Endothelial cell of umbilical vein (primary cell): ENCODE measurements at regions of chr10 and their contacts with region 1.

Region 1: DNA sequence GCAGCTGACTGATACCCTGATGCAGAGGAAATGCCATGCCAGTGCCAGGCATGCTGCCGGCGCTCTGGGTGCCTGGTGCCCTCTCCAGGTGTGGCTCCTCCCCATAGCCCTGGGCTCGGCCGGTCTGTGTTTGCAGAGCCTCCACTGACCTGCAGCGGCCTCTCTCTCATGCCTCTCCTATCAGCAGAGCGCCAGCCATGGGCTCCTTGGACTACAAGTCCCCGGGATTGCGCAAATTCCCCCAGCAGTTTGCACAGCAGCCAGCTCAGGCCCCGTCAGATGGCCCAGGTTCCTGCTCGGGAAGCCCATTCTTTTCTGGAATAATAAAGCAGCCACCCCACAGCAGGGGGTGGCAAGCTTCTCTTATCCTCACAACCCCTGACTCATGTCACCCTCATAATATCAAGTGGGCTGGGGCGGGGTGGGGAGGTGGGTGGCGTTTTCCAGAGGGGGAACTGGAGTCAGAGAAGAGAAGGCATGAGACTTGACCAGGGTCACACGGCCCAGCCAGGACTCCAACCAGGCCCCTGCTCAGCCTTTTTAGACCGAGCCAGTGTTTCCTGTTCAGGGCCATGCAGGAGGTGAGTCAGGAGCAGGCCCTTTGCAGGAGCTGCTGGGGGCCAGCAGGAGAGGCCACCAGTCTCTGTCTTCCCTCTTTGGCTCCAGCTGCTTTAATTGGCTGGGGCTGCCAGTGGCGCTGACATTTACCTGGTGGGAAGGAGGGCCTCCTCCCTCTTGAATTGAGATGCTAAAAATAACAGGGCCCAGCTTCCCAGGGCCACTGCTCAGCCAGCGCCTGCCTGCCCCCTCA is 58.6 kb downstream of the ZMIZ1 start:
- DNase-seq: peak; percentile 67
- H3K4me3 ChIP-seq: no peak overlapping the region
- H3K27ac ChIP-seq: peak overlapping the region; percentile 21
- H3K4me1 ChIP-seq: peaks cover 49% of the 10 kb centered on the region
- H3K27me3 ChIP-seq: no peaks in the 10 kb centered on the region
- CTCF ChIP-seq: no peak
- POLR2A ChIP-seq: no peak

Region 2: GRCh38 chr10:78664929-78665553 is 462.3 kb before region 1 on chr10:
- CTCF ChIA-PET with region 1: no interaction called
- POLR2A ChIA-PET with region 1: no interaction called
- dilution Hi-C with region 1: no loop called
- intact Hi-C with region 1: no loop called
- DNase-seq: peak; percentile 41
- H3K4me3 ChIP-seq: no peak overlapping the region
- H3K27ac ChIP-seq: no peak overlapping the region
- H3K4me1 ChIP-seq: no peaks in the 10 kb centered on the region
- H3K27me3 ChIP-seq: peaks cover 6 to 24% of the 10 kb centered on the region in 2 experiments
- CTCF ChIP-seq: peak; percentile 36 to 46
- POLR2A ChIP-seq: no peak

Region 3: GRCh38 chr10:79112881-79113431 is 14.4 kb before region 1 on chr10:
- CTCF ChIA-PET with region 1: interaction called, 4 read pairs
- POLR2A ChIA-PET with region 1: no interaction called
- dilution Hi-C with region 1: no loop called
- intact Hi-C with region 1: loop called (anchors 1 kb)
- DNase-seq: peak; percentile 36
- H3K4me3 ChIP-seq: no peak overlapping the region
- H3K27ac ChIP-seq: peak overlapping the region; percentile 35
- H3K4me1 ChIP-seq: peaks cover 11% of the 10 kb centered on the region
- H3K27me3 ChIP-seq: no peaks in the 10 kb centered on the region
- CTCF ChIP-seq: no peak
- POLR2A ChIP-seq: no peak

Region 4: DNA sequence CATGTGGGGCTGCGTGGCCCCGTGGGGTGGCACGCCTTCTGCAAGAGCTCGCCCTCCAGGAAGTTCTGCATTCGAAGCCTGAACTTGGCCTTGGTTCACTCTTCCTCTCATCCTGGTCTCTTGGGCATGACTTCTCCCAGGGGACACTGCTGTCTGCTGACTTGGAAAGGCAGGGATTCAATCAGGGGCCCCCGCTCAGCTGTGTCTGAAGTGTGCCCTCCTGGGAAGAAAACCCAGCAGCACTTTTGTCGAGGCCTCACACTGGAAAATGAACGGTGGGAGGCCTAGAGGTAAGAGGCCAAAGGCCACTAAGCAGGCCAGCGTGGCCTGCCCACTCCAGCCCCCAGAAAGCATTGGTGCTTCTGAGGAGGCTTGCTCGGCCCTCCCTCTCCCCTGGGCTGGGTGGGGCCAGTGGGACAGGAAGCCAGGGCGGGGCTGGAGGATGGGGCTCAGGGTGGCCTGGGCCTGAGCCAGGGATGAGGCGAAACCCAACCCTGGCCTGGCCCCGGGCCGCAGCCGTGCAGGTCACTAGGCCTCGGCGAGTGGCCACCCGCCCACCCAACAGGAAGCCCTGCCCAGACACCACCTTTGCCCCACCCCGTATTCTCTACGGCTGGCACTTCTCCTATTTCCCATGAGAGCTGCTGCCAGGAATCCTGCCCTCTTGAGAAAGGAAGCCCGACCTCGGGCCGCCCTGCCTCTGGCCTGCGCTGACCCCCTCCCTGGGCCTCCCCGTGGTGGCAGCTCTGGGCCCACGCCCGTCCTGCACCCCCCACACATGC is 22.5 kb after region 1 on chr10:
- CTCF ChIA-PET with region 1: interaction called, 8 read pairs
- POLR2A ChIA-PET with region 1: no interaction called
- dilution Hi-C with region 1: no loop called
- intact Hi-C with region 1: loop called (anchors 1 kb)
- DNase-seq: no peak
- H3K4me3 ChIP-seq: no peak overlapping the region
- H3K27ac ChIP-seq: peak overlapping the region; percentile 88
- H3K4me1 ChIP-seq: peaks cover 84% of the 10 kb centered on the region
- H3K27me3 ChIP-seq: no peaks in the 10 kb centered on the region
- CTCF ChIP-seq: no peak
- POLR2A ChIP-seq: peak; percentile 43

Region 5: GRCh38 chr10:79155301-79156081 is 28.1 kb after region 1 on chr10:
- CTCF ChIA-PET with region 1: interaction called, 10 read pairs
- POLR2A ChIA-PET with region 1: no interaction called
- dilution Hi-C with region 1: no loop called
- intact Hi-C with region 1: loop called (anchors 1 kb)
- DNase-seq: peak; percentile 66
- H3K4me3 ChIP-seq: no peak overlapping the region
- H3K27ac ChIP-seq: peak overlapping the region; percentile 77
- H3K4me1 ChIP-seq: peaks cover 76% of the 10 kb centered on the region
- H3K27me3 ChIP-seq: no peaks in the 10 kb centered on the region
- CTCF ChIP-seq: peak in 1 of 2 donors; percentile 34
- POLR2A ChIP-seq: no peak

Region 6: GRCh38 chr10:79178614-79179163 is 51.3 kb after region 1 on chr10:
- CTCF ChIA-PET with region 1: interaction called, 7 read pairs
- POLR2A ChIA-PET with region 1: no interaction called
- dilution Hi-C with region 1: no loop called
- intact Hi-C with region 1: loop called (anchors 2 kb)
- DNase-seq: peak; percentile 93
- H3K4me3 ChIP-seq: no peak overlapping the region
- H3K27ac ChIP-seq: peak overlapping the region; percentile 64
- H3K4me1 ChIP-seq: peaks cover 57% of the 10 kb centered on the region
- H3K27me3 ChIP-seq: no peaks in the 10 kb centered on the region
- CTCF ChIP-seq: no peak
- POLR2A ChIP-seq: no peak